Left ventricle myocardium inferior (tissue), 1 donor: ENCODE measurements at regions of chr3 and their contacts with region 1.

Region 1: GRCh38 chr3:46509661-46510187 is 11.9 kb downstream of the RTP3 start:
- DNase-seq: no peak
- H3K4me3 ChIP-seq: no peak overlapping the region
- H3K27ac ChIP-seq: no peak overlapping the region
- H3K4me1 ChIP-seq: no peaks in the 10 kb centered on the region
- H3K27me3 ChIP-seq: no peaks in the 10 kb centered on the region
- CTCF ChIP-seq: no peak

Region 2: GRCh38 chr3:46629551-46630517 is 120.1 kb after region 1 on chr3:
- intact Hi-C with region 1: no loop called
- DNase-seq: peak; percentile 84
- H3K4me3 ChIP-seq: peak overlapping the region; percentile 52
- H3K27ac ChIP-seq: peak overlapping the region; percentile 76
- H3K4me1 ChIP-seq: peaks cover 24% of the 10 kb centered on the region
- H3K27me3 ChIP-seq: no peaks in the 10 kb centered on the region
- CTCF ChIP-seq: peak; percentile 99

Region 3: GRCh38 chr3:46812237-46812791 is 302.6 kb after region 1 on chr3:
- intact Hi-C with region 1: loop called (anchors 5 kb)
- DNase-seq: peak; percentile 75
- H3K4me3 ChIP-seq: peak overlapping the region; percentile 54
- H3K27ac ChIP-seq: no peak overlapping the region
- H3K4me1 ChIP-seq: peaks cover 33% of the 10 kb centered on the region
- H3K27me3 ChIP-seq: peaks cover 13% of the 10 kb centered on the region
- CTCF ChIP-seq: no peak